ENCODE measurements at regions of chr15 and their contacts with region 1.

Region 1: GRCh38 chr15:60507596-60508424 is 28.9 kb upstream of the ICE2 start:
- DNase-seq: peak in 1 of 2 experiments; percentile 45
- H3K4me3 ChIP-seq: no peak overlapping the region
- H3K27ac ChIP-seq: no peak overlapping the region
- H3K4me1 ChIP-seq: no peaks in the 10 kb centered on the region
- H3K27me3 ChIP-seq: no peaks in the 10 kb centered on the region
- CTCF ChIP-seq: peak; percentile 85

Region 2: DNA sequence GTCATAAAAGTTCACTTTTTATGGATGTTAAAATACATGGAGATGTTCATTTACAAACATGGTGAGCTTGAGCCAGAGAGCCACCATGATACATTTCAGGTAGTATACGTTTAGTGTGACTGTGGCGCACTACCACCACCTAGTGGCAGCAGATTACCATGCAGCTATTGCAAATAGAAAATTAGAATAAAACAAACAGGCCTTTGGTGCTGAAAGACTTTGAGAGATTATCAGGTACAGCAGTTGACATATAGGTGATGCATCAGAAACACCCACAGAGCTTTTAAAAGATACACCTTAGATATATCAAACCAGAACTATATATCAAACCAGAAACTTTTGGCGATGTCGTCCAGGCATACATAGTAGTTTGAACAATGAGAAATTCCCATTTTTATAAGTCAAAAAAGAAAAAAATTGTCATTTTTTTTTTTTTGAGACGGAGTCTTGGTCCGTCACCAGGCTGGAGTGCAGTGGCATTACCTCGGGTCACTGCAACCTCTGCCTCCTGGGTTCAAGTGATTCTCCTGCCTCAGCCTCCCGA is 13.1 kb after region 1 on chr15:
- CTCF ChIA-PET with region 1: interaction called, 5 read pairs
- POLR2A ChIA-PET with region 1: no interaction called
- intact Hi-C with region 1: loop called (anchors 1 kb)
- DNase-seq: peak; percentile 36 to 68
- H3K4me3 ChIP-seq: no peak overlapping the region
- H3K27ac ChIP-seq: peak overlapping the region; percentile 92
- H3K4me1 ChIP-seq: peaks cover 33% of the 10 kb centered on the region
- H3K27me3 ChIP-seq: no peaks in the 10 kb centered on the region
- CTCF ChIP-seq: peak; percentile 88

Region 3: DNA sequence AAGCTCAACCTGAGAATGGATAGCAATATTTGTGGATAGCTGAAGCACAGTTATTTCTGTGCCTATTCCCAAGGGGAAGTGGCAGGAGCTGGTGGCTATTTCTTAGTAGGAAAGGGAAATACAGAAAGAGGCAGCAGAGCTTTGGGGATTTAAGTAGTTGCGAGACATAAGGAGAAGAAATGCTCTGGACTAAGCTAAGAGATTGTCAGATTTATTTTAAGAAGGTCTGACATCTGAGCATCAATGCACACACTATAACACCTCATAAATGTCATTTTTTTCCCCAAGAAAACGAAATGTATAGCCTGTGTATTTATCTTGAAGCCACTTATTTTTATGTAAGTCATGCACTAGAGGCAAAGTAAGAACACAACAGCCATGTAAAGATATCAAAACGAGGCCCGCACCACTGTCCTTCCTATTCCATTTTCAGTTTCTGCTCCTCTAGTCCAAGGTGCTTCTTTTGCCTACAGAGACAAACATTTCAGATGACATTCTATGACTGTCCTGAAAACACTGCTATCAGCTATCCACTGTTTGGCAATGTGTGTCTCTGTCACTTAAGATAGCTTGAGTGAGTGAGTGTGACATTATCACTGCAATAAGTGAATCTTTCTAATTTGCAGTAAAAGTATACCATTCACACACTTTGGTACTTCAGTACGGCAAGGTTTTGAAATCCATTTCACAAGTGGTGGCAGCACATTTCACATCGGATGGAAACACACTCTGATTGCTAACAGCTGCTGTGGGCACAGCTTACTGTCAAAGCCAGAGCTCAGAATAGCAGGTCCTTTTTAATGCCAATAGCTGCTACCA is 33.9 kb after region 1 on chr15:
- CTCF ChIA-PET with region 1: no interaction called
- POLR2A ChIA-PET with region 1: no interaction called
- intact Hi-C with region 1: no loop called
- DNase-seq: no peak
- H3K4me3 ChIP-seq: no peak overlapping the region
- H3K27ac ChIP-seq: no peak overlapping the region
- H3K4me1 ChIP-seq: no peaks in the 10 kb centered on the region
- H3K27me3 ChIP-seq: no peaks in the 10 kb centered on the region
- CTCF ChIP-seq: no peak

Region 4: DNA sequence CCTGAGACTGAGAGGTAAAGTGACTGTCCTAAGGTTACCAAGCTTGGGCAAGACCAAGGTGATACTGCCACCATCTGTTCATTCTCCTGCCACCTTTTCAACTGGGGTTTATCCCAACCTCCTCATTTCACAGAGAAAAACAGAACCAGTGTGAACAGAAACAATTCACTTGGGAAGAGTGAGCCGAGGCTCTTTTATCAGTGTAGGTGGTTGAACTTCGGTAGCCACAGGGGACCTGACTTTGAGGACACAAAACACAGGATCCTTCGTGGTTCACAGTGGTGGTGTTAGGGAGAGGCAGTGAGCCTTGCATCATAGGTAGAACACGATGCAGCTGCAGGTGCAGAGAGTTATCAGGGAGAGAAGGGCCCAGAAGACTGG is 44.0 kb after region 1 on chr15:
- CTCF ChIA-PET with region 1: no interaction called
- POLR2A ChIA-PET with region 1: no interaction called
- intact Hi-C with region 1: loop called (anchors 2 kb)
- DNase-seq: peak in 1 of 2 experiments; percentile 6
- H3K4me3 ChIP-seq: no peak overlapping the region
- H3K27ac ChIP-seq: no peak overlapping the region
- H3K4me1 ChIP-seq: no peaks in the 10 kb centered on the region
- H3K27me3 ChIP-seq: no peaks in the 10 kb centered on the region
- CTCF ChIP-seq: no peak; the same call in 1 of the 2 replicates

Region 5: DNA sequence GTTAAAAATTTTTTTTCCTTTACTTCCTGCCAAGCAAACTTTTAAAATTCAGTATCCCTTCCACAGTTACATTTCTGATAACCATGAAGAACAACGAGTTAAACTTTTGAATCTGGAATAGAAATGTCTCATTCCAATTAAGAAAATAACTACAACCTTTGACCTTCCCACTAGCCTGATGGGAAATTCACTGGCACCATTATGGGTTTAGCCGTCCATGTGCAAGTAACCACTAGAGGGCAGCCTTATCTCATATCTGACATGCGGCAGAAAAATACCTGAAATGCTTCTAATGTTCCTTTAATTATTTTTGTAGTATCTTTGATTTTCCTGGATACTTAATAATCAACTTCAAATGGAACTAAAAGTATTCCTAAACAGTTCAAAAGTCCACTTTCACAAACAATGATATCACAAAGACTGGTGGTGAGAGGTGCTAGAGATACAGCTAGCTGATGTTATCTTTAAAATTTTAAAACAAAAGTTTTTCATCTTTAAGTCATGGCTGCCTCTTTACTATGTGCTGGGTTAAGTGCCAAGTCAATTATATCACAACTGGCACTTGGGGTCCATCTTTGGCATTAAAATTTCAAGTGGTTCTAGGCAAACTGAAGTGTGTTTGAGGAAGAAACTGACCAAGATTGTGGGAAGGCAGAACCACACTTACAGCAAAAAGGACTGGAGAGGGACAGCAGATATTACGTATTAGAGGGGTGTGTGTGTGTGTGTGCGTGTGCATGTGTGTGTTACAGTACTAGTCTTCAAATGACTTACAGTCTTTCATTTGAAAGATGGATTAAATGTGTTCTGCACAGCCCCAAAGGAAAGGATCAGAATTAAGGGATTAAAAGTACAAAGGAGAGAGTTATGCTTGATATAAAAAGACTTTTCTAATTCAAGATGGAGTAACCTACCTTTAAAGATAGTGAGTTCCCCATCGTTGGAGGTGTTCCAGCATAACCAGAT is 78.2 kb after region 1 on chr15:
- CTCF ChIA-PET with region 1: interaction called, 3 read pairs
- POLR2A ChIA-PET with region 1: no interaction called
- intact Hi-C with region 1: loop called (anchors 5 kb)
- DNase-seq: peak; percentile 38 to 48
- H3K4me3 ChIP-seq: no peak overlapping the region
- H3K27ac ChIP-seq: no peak overlapping the region
- H3K4me1 ChIP-seq: peaks cover 8% of the 10 kb centered on the region
- H3K27me3 ChIP-seq: no peaks in the 10 kb centered on the region
- CTCF ChIP-seq: peak; percentile 82

Region 6: GRCh38 chr15:60916679-60917460 is 409.1 kb after region 1 on chr15:
- CTCF ChIA-PET with region 1: no interaction called
- POLR2A ChIA-PET with region 1: no interaction called
- intact Hi-C with region 1: loop called (anchors 5 kb)
- DNase-seq: peak; percentile 52 to 56
- H3K4me3 ChIP-seq: no peak overlapping the region
- H3K27ac ChIP-seq: no peak overlapping the region
- H3K4me1 ChIP-seq: peaks cover 26% of the 10 kb centered on the region
- H3K27me3 ChIP-seq: no peaks in the 10 kb centered on the region
- CTCF ChIP-seq: peak; percentile 78

Measured in PC-9 (cell line).